ENCODE measurements at regions of chr17 and their contacts with region 1.

Region 1: GRCh38 chr17:61704935-61705449 is 114.0 kb upstream of the NACA2 start:
- DNase-seq: no peak
- H3K4me3 Mint-ChIP-seq: no peak overlapping the region
- H3K27ac Mint-ChIP-seq: no peak overlapping the region
- H3K4me1 Mint-ChIP-seq: no peaks in the 10 kb centered on the region
- H3K27me3 Mint-ChIP-seq: no peaks in the 10 kb centered on the region

Region 2: DNA sequence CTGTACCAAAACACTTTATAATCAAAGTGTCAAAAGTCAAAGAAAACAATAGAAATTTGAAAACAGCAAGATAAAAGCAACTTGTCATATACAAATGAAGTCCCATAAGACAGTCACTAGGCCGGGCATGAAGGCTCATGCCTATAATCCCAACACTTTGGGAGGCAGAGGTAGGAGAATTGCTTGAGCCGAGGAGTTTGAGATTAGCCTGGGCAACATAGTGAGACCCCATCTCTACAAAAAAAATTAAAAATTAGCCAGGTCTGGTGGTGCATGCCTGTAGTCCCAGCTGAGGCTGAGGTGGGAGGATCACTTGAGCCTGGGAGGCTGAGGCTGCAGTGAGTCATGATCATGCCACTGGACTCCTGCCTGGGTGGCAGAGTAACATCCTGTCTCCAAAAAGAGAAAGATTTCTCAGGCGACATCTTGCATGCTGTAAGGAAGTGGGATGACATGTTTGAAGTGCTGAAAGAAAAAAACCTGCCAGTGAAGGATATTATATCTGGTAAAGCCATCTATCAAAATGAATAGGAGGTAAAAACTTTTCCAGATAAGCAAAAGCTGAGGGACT is 15.3 kb before region 1 on chr17:
- CTCF ChIA-PET with region 1: no interaction called
- POLR2A ChIA-PET with region 1: no interaction called
- intact Hi-C with region 1: loop called (anchors 1 kb)
- DNase-seq: no peak
- H3K4me3 Mint-ChIP-seq: no peak overlapping the region
- H3K27ac Mint-ChIP-seq: no peak overlapping the region
- H3K4me1 Mint-ChIP-seq: no peaks in the 10 kb centered on the region
- H3K27me3 Mint-ChIP-seq: no peaks in the 10 kb centered on the region